Activated CD4-positive, alpha-beta T cell treated with anti-CD3 and anti-CD28 coated beads, Interleukin-2, amount 10 ng/mL, durations not matched to agents 24 days and 14 days (primary cell): ENCODE measurements at regions of chr3 and their contacts with region 1.

Region 1: DNA sequence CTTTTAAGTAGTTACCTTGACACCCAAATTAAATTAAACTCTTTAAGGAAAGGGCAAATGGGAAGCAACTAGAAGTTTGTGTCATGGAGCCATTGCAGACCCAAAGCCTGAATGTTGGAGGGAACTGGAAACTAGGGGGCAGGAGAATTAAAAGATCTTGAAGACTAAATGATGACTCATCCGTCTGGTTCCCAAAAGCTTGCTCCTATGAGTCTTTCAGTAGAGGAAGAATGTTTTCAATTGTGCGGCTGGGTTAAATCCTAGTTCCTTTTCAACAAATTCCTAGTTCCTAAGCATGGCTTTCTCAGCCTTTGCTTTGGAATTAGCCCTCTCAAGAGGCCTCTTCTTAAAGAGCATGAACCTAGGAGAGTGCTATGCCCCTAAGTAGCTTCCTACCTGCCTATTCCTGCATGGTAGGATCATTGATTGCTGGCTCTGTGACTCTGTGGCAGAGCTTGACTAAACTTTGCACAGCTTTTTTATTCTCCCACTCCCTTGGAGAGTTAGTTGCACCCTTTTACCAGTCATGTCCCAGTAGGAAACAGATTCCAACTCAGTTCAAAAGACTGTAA is 17.7 kb downstream of the CLEC3B start:
- DNase-seq: no peak
- H3K4me3 Mint-ChIP-seq: no peak overlapping the region
- H3K27ac Mint-ChIP-seq: no peak overlapping the region
- H3K4me1 Mint-ChIP-seq: peaks cover 24% of the 10 kb centered on the region
- H3K27me3 Mint-ChIP-seq: peaks cover 29% of the 10 kb centered on the region

Region 2: GRCh38 chr3:45001738-45002137 is 42.1 kb before region 1 on chr3:
- intact Hi-C with region 1: no loop called
- DNase-seq: no peak
- H3K4me3 Mint-ChIP-seq: no peak overlapping the region
- H3K27ac Mint-ChIP-seq: no peak overlapping the region
- H3K4me1 Mint-ChIP-seq: peaks cover 23% of the 10 kb centered on the region
- H3K27me3 Mint-ChIP-seq: no peaks in the 10 kb centered on the region

Region 3: DNA sequence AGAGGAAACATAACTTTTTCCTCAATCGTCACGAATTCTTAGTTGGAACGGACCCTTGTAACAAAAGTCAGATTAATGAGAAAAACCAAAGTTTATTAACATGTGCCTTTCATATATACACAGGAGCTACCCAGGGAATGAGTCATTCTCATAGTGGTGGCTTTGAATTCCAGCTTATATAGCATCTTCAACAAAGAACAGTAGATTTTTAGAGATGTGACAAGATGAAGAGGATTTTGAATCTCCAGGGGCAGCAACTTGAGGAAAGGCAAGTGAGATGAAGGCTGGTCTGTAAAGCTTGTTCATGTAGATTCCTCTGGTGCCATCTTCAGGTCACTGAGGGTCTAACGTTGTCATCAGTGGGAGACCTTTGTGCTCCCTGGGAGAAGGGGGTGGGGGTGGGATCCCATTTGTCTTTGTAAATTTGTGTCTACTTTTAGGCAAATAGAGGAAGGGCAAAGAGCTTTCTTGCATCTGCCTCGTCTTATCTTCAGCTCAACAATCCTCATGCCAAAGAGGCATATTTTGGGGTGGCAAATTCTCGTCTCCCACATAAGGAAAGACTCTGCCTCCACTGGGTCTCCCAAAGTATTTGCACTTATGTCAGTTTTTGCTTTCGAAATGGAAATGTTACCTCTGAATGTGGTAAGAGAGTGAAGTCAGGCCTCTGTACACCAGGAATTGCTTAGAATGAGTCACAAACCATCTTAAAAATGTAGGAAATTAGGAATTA is 11.8 kb after region 1 on chr3:
- intact Hi-C with region 1: loop called (anchors 2 kb)
- DNase-seq: peak; percentile 66
- H3K4me3 Mint-ChIP-seq: no peak overlapping the region
- H3K27ac Mint-ChIP-seq: no peak overlapping the region
- H3K4me1 Mint-ChIP-seq: peaks cover 27% of the 10 kb centered on the region
- H3K27me3 Mint-ChIP-seq: peaks cover 2% of the 10 kb centered on the region

Region 4: DNA sequence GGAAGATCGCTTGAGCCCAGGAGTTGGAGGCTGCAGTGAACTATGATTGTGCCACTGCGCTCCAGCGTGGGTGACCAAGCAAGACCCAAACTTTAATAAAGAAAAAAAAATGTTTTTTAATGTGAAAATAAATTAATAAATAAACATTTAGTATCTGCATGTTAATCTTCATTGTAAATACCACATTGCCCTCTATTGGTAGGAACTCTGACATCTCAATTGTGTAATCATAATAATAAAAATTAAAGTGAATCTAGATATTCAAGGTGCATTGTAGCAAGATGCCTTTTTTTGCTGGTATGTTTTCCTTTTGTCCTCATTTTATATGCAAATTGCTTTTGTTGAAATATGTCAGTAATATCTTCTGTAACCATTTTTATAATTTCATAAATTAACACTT is 455.7 kb after region 1 on chr3:
- intact Hi-C with region 1: loop called (anchors 2 kb)
- DNase-seq: no peak
- H3K4me3 Mint-ChIP-seq: no peak overlapping the region
- H3K27ac Mint-ChIP-seq: no peak overlapping the region
- H3K4me1 Mint-ChIP-seq: peaks cover 3% of the 10 kb centered on the region
- H3K27me3 Mint-ChIP-seq: no peaks in the 10 kb centered on the region